BJ (cell line): ENCODE measurements at regions of chr14 and their contacts with region 1.

Region 1: GRCh38 chr14:32478050-32478449 is 149.0 kb downstream of the AKAP6 start:
- DNase-seq: peak; percentile 45
- H3K4me3 ChIP-seq: no peak overlapping the region
- H3K27me3 ChIP-seq: no peaks in the 10 kb centered on the region
- CTCF ChIP-seq: no peak

Region 2: DNA sequence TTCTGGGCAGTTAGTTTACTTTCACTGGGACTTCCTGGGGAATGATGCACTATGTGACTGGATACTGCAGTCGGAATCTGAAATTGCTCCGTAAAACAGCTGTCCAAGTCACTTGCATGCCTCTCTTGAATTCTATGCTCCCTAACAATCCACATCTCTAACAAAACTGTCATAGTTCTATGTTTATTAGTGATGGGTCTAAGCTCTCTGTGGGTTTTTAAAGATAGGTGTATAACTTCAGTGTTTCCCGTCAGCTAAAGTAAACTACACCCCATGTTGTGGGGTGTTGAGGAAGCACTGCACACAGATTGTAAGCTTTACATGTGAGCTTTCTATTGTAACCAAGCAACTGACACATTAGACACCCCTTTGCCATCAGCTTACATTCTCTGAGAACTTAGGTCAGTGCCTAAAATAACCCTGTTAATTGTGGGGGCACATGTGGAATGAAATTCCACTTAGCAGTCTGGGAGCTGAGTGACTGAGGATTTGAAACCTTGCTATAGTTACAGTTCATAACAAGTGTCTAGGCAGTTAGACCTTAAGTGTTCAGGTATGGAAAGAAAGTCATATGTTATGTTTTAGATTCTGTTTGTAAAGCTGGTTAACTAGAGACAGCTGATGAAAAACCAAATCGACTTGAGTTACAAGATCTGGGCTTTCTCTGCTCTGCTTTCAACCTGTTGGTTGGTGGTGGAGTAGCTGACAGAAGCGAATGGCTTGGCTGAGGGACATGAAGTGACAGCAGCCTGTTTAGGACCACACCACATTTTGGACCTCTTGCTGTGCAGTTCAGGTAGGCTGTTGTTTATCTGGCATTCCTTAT is 16.8 kb after region 1 on chr14:
- CTCF ChIA-PET with region 1: interaction called, 7 read pairs
- POLR2A ChIA-PET with region 1: interaction called, 10 read pairs
- DNase-seq: peak; percentile 59
- H3K4me3 ChIP-seq: peak overlapping the region; percentile 26
- H3K27me3 ChIP-seq: no peaks in the 10 kb centered on the region
- CTCF ChIP-seq: no peak